ENCODE measurements at regions of chr9 and their contacts with region 1.

Region 1: DNA sequence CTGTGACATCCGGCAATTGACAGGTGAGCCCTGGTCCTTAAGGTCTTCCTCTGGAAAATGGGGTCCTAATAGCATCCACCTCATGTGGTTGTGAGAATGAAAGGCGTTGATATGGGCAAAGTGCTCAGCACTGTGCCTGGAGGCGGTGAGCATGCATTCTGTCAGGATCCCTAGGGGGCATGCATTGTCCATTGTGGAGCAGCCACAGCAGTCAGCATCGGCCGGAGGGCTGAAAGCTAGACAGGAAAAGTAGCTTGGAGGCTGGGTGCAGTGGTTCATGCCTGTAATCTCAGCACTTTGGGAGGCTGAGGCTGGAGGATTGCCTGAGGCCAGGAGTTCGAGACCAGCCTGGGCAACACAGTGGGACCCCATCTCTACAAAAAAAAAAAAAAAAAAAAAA is 122.2 kb downstream of the LHX2 start:
- DNase-seq: no peak
- ATAC-seq: peak; percentile 29
- H3K4me3 ChIP-seq: no peak overlapping the region
- H3K27ac ChIP-seq: no peak overlapping the region
- H3K4me1 ChIP-seq: peaks cover 21% of the 10 kb centered on the region
- H3K27me3 ChIP-seq: no peaks in the 10 kb centered on the region
- CTCF ChIP-seq: peak; percentile 27 to 63 (median 31); a peak in 4 of 6 replicates
- EP300 ChIP-seq: no peak
- POLR2A ChIP-seq: no peak
- RAD21 ChIP-seq: peak; percentile 46

Region 2: GRCh38 chr9:124174433-124174832 is 40.7 kb after region 1 on chr9:
- CTCF ChIA-PET with region 1: no interaction called
- POLR2A ChIA-PET with region 1: interaction called, 3 read pairs
- RAD21 ChIA-PET with region 1: interaction called, 11 read pairs
- SMC1A ChIA-PET with region 1: interaction called, 4 read pairs
- in situ Hi-C with region 1: no loop called
- intact Hi-C with region 1: no loop called
- DNase-seq: peak; percentile 25
- ATAC-seq: peak; percentile 44
- H3K4me3 ChIP-seq: peak overlapping the region; percentile 31; the same call in 1 of the 2 replicates
- H3K27ac ChIP-seq: peak overlapping the region; percentile 50
- H3K4me1 ChIP-seq: peaks cover 10% of the 10 kb centered on the region
- H3K27me3 ChIP-seq: no peaks in the 10 kb centered on the region; a peak in 1 of 4 replicates
- CTCF ChIP-seq: no peak
- EP300 ChIP-seq: no peak
- POLR2A ChIP-seq: no peak
- RAD21 ChIP-seq: no peak

Region 3: DNA sequence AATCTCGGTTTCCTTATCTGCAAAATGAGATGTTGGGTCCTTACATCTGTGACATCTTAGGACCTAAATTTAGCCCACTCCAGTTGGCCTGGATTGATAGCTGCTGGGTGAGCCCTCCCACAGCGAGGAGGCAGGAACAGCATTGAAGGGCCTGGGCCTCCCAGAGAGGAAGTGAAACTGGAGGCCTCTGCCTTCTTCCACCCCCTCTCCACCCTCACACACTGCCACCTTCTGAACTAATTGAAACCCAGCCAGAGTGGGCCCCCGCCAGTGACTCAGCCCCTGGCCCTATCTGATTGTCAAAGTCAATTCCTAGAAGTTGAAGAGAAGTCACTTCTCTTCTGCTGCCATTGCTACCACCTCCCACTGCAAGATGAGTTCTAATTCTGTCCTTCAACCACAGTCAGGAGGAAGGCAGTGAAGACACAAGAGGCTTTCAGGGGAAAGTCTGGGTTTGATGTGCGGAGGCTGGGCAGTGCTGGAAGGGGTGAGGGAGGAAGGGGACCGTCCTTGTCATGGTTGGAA is 68.8 kb after region 1 on chr9:
- CTCF ChIA-PET with region 1: interaction called, 20 read pairs
- POLR2A ChIA-PET with region 1: interaction called, 27 read pairs
- RAD21 ChIA-PET with region 1: interaction called, 85 read pairs
- SMC1A ChIA-PET with region 1: interaction called, 89 read pairs
- in situ Hi-C with region 1: no loop called
- intact Hi-C with region 1: loop called (anchors 1 kb)
- DNase-seq: peak; percentile 98
- ATAC-seq: peak; percentile 83
- H3K4me3 ChIP-seq: peak overlapping the region; percentile 37; the same call in 1 of the 2 replicates
- H3K27ac ChIP-seq: peak overlapping the region; percentile 99
- H3K4me1 ChIP-seq: peaks cover 77% of the 10 kb centered on the region
- H3K27me3 ChIP-seq: no peaks in the 10 kb centered on the region
- CTCF ChIP-seq: 0 out of 6 replicates have a peak, but pooled peaks of 1 of the 3 experiments have one; percentile 5
- EP300 ChIP-seq: peak; percentile 84 to 98; a peak in 3 of 4 replicates
- POLR2A ChIP-seq: peak; percentile 64; the same call in 1 of the 2 replicates
- RAD21 ChIP-seq: peak; percentile 49

Region 4: GRCh38 chr9:124257844-124258606 is 124.3 kb after region 1 on chr9 and contains the start of gene NEK6:
- CTCF ChIA-PET with region 1: interaction called, 3 read pairs
- POLR2A ChIA-PET with region 1: interaction called, 14 read pairs
- RAD21 ChIA-PET with region 1: interaction called, 3 read pairs
- SMC1A ChIA-PET with region 1: interaction called, 5 read pairs
- in situ Hi-C with region 1: no loop called
- intact Hi-C with region 1: loop called (anchors 2 kb)
- DNase-seq: no peak
- ATAC-seq: peak; percentile 2
- H3K4me3 ChIP-seq: peak within 1 kb of the TSS; percentile 95
- H3K27ac ChIP-seq: peak within 1 kb of the TSS; percentile 88
- H3K4me1 ChIP-seq: peaks cover 35% of the 10 kb centered on the region
- H3K27me3 ChIP-seq: no peaks in the 10 kb centered on the region
- CTCF ChIP-seq: no peak
- EP300 ChIP-seq: no peak
- POLR2A ChIP-seq: peak; percentile 72
- RAD21 ChIP-seq: no peak
- polyA plus RNA-seq, gene NEK6: 31.3 to 33.2 TPM

Region 5: DNA sequence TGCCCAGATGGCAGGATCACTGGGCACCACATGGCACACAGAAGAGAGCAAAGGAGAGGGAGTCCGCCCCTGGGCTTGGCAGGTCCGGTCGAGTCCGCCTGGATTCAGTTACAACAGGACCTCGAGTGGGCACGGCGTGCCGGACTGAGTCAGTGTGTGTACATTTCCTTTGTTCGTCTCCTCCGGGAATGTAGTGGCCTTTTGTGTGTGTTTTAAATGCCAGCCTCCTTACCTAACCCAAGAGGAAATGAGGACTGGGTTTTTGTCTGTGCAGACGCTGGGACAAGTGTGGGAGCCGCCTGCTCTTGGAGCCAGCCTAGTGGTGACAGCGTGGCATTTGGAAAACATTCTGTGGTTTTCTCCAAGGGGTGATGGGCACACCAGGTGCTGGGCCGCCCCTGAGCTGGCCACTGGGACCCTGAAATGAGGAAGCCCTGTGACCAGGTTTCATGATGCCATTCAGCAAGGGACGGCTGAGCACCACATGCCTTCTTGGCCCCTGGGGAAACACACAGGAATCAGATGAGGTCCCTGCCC is 133.6 kb after region 1 on chr9:
- CTCF ChIA-PET with region 1: interaction called, 13 read pairs
- POLR2A ChIA-PET with region 1: interaction called, 5 read pairs
- RAD21 ChIA-PET with region 1: interaction called, 7 read pairs
- SMC1A ChIA-PET with region 1: interaction called, 7 read pairs
- in situ Hi-C with region 1: no loop called
- intact Hi-C with region 1: no loop called
- DNase-seq: no peak
- ATAC-seq: peak; percentile 8
- H3K4me3 ChIP-seq: peak overlapping the region; percentile 61; the same call in 1 of the 2 replicates
- H3K27ac ChIP-seq: peak overlapping the region; percentile 7
- H3K4me1 ChIP-seq: peaks cover 44% of the 10 kb centered on the region
- H3K27me3 ChIP-seq: no peaks in the 10 kb centered on the region
- CTCF ChIP-seq: 0 out of 6 replicates have a peak, but pooled peaks of 1 of the 3 experiments have one; percentile 8
- EP300 ChIP-seq: no peak
- POLR2A ChIP-seq: peak; percentile 18
- RAD21 ChIP-seq: no peak

Region 6: DNA sequence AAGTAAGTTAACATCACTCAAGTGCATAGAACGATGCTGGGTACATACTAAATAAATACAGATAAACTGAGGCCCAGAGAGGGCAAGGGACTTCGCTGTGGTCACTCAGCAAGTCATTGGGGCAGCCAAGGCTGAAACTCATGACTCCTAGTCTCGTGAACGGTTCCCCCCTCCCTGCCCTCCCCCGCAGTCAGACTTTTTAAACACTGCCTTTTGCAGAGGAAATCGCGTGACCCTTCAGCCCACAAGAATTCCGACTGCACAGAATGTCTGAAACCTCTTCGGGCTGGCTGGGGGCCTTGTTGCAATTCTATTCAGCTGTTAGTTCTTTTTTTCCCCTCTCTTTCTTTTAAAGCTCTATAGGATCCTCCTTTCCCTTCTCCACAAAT is 152.2 kb after region 1 on chr9:
- CTCF ChIA-PET with region 1: interaction called, 42 read pairs
- POLR2A ChIA-PET with region 1: interaction called, 12 read pairs
- RAD21 ChIA-PET with region 1: interaction called, 8 read pairs
- SMC1A ChIA-PET with region 1: interaction called, 18 read pairs
- in situ Hi-C with region 1: loop called (anchors 25 kb)
- intact Hi-C with region 1: loop called (anchors 1 kb)
- DNase-seq: peak; percentile 70
- ATAC-seq: peak; percentile 62
- H3K4me3 ChIP-seq: peak overlapping the region; percentile 54
- H3K27ac ChIP-seq: peak overlapping the region; percentile 97
- H3K4me1 ChIP-seq: peaks cover 72% of the 10 kb centered on the region
- H3K27me3 ChIP-seq: no peaks in the 10 kb centered on the region
- CTCF ChIP-seq: no peak
- EP300 ChIP-seq: peak; percentile 77 to 93
- POLR2A ChIP-seq: no peak
- RAD21 ChIP-seq: peak; percentile 17; the same call in 1 of the 2 replicates

Region 7: GRCh38 chr9:124291801-124292396 is 158.2 kb after region 1 on chr9:
- CTCF ChIA-PET with region 1: interaction called, 42 read pairs
- POLR2A ChIA-PET with region 1: interaction called, 12 read pairs
- RAD21 ChIA-PET with region 1: interaction called, 17 read pairs
- SMC1A ChIA-PET with region 1: interaction called, 18 read pairs
- in situ Hi-C with region 1: loop called (anchors 25 kb)
- intact Hi-C with region 1: loop called (anchors 1 kb)
- DNase-seq: peak; percentile 77
- ATAC-seq: peak; percentile 67
- H3K4me3 ChIP-seq: peak overlapping the region; percentile 56
- H3K27ac ChIP-seq: peak overlapping the region; percentile 91
- H3K4me1 ChIP-seq: peaks cover 90% of the 10 kb centered on the region
- H3K27me3 ChIP-seq: no peaks in the 10 kb centered on the region
- CTCF ChIP-seq: peak; percentile 18 to 41 (median 21); a peak in 3 of 6 replicates
- EP300 ChIP-seq: peak; percentile 45 to 68; a peak in 3 of 4 replicates
- POLR2A ChIP-seq: peak; percentile 45
- RAD21 ChIP-seq: no peak

Measured in GM12878 (cell line).